CD4-positive, alpha-beta T cell (primary cell): ENCODE measurements at regions of chr12 and their contacts with region 1.

Region 1: DNA sequence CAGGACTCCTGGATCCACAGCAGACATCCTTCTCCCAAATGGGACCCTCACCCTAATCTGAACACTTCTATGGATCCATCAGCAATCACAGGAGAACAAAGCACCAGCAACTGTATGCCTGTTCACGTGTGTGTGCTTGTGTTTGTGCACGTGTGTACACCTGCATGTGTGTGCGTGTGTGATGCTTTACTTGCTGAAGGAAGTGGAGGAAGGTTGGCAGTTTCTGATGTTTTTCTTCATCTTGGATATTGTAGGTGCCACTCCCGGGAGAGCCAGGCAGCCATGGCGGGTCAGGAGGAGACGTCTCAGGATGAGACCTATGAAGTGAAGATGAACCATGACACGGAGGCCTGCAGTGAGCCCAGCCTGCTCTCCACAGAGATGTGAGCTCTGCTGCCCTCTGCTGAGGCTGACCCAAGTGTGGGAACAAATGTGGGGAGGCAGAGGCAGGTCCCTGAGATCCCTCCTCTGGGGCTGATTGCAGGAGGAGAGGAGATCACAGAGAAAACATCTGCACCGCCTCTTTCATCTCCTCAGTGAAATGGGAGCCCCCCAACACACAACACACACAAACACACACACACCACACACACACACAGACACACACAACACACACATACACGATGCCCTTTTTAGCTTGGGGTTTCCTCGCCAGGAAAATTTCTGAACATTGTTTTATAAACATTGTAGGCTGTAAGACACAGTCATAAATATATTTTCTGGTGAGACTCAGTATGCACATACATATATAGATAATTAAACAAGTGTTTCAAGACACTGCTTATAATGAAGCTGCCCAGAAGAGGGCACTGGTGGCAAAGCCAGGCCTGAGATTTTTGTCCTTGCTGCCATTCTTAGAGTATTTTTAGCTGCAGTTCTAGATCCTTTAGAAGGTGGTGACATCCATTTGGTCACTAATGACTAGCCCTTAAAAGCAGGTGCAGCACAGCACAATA is 112.2 kb upstream of the FKBP4 start:
- DNase-seq: peak in 12 of 14 experiments; percentile 21 to 74 (median 37)
- ATAC-seq: peak; percentile 81
- H3K4me3 ChIP-seq: no peak overlapping the region
- H3K4me3 Mint-ChIP-seq: peak overlapping the region; percentile 40
- H3K27ac ChIP-seq: no peak overlapping the region
- H3K27ac Mint-ChIP-seq: peak overlapping the region; percentile 30
- H3K4me1 ChIP-seq: peaks cover 6% of the 10 kb centered on the region
- H3K4me1 Mint-ChIP-seq: peaks cover 7% of the 10 kb centered on the region
- H3K27me3 ChIP-seq: no peaks in the 10 kb centered on the region
- H3K27me3 Mint-ChIP-seq: no peaks in the 10 kb centered on the region
- CTCF ChIP-seq: peak; percentile 62

Region 2: GRCh38 chr12:2783936-2784600 is 101.5 kb after region 1 on chr12:
- CTCF ChIA-PET with region 1: interaction called, 27 read pairs
- POLR2A ChIA-PET with region 1: interaction called, 5 read pairs
- intact Hi-C with region 1: loop called (anchors 1 kb)
- DNase-seq: peak in 13 of 14 experiments; percentile 12 to 72 (median 34)
- ATAC-seq: peak; percentile 91
- H3K4me3 ChIP-seq: peak overlapping the region; percentile 29
- H3K4me3 Mint-ChIP-seq: peak overlapping the region; percentile 80
- H3K27ac ChIP-seq: no peak overlapping the region
- H3K27ac Mint-ChIP-seq: no peak overlapping the region
- H3K4me1 ChIP-seq: peaks cover 10% of the 10 kb centered on the region
- H3K4me1 Mint-ChIP-seq: peaks cover 9% of the 10 kb centered on the region
- H3K27me3 ChIP-seq: no peaks in the 10 kb centered on the region
- H3K27me3 Mint-ChIP-seq: peaks cover 19% of the 10 kb centered on the region
- CTCF ChIP-seq: peak; percentile 90

Region 3: DNA sequence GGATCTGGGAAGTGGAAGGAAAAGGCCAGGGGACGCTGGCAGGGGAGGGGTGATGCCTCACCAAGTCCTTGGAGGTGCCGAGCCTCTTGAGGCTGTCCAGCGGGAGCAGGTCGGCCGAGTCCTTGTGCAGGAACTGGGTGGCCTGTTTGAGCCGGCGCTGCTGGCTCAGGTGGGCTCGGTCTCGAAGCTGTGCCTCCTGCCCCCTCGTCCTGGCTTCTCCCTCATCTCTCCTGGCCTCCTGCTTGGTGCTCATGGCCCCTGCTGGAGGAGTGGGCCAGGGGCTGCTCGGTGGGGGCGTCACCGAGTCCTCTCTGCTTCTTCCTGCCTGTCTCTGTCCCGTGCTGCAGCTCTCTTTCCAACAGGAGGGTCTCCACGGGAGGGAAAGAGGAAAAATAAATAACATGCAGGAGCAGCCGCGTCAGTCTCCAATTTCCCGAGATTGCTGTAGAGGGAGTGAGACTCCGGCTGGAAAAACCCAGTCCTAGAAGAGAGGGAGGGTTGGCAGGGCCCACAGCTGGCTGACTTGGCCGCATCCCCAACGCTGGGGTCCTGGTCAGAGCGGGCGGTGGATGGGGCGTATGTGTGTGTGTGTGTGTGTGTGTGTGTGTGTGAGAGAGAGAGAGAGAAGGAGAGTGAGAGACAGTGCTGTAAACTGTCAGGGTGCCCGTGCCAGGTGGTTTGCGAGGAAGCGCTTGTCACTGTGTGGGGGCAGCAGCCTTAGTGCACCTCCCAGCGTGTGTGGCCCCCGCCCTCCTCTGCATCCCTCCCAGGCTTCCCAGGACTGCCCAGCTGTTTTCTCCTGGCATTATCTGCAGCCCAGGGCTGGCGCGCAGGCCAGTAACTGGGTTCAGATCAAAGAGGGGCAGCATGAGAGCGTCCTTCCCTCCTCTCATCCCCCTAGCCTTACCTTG is 152.3 kb after region 1 on chr12 and contains the start of gene NRIP2:
- CTCF ChIA-PET with region 1: no interaction called
- POLR2A ChIA-PET with region 1: no interaction called
- intact Hi-C with region 1: no loop called
- DNase-seq: no peak
- ATAC-seq: no peak
- H3K4me3 ChIP-seq: no peak within 1 kb of the TSS
- H3K4me3 Mint-ChIP-seq: no peak within 1 kb of the TSS
- H3K27ac ChIP-seq: no peak within 1 kb of the TSS
- H3K27ac Mint-ChIP-seq: peak within 1 kb of the TSS; percentile 5
- H3K4me1 ChIP-seq: no peaks in the 10 kb centered on the region
- H3K4me1 Mint-ChIP-seq: peaks cover 12% of the 10 kb centered on the region
- H3K27me3 ChIP-seq: no peaks in the 10 kb centered on the region
- H3K27me3 Mint-ChIP-seq: no peaks in the 10 kb centered on the region
- CTCF ChIP-seq: no peak
- total RNA-seq, gene NRIP2: not detected

Region 4: GRCh38 chr12:3041558-3042164 is 359.1 kb after region 1 on chr12:
- CTCF ChIA-PET with region 1: no interaction called
- POLR2A ChIA-PET with region 1: no interaction called
- intact Hi-C with region 1: loop called in 1 of 2 experiments (anchors 2 kb)
- DNase-seq: peak in 13 of 14 experiments; percentile 14 to 72 (median 25)
- ATAC-seq: peak; percentile 67
- H3K4me3 ChIP-seq: no peak overlapping the region
- H3K4me3 Mint-ChIP-seq: no peak overlapping the region
- H3K27ac ChIP-seq: no peak overlapping the region
- H3K27ac Mint-ChIP-seq: no peak overlapping the region
- H3K4me1 ChIP-seq: no peaks in the 10 kb centered on the region
- H3K4me1 Mint-ChIP-seq: no peaks in the 10 kb centered on the region
- H3K27me3 ChIP-seq: peaks cover 10 to 17% of the 10 kb centered on the region in 2 experiments
- H3K27me3 Mint-ChIP-seq: peaks cover 36% of the 10 kb centered on the region
- CTCF ChIP-seq: peak; percentile 55

Region 5: GRCh38 chr12:3060778-3061458 is 378.3 kb after region 1 on chr12:
- CTCF ChIA-PET with region 1: no interaction called
- POLR2A ChIA-PET with region 1: no interaction called
- intact Hi-C with region 1: no loop called
- DNase-seq: no peak
- ATAC-seq: no peak
- H3K4me3 ChIP-seq: no peak overlapping the region
- H3K4me3 Mint-ChIP-seq: no peak overlapping the region
- H3K27ac ChIP-seq: no peak overlapping the region
- H3K27ac Mint-ChIP-seq: no peak overlapping the region
- H3K4me1 ChIP-seq: no peaks in the 10 kb centered on the region
- H3K4me1 Mint-ChIP-seq: no peaks in the 10 kb centered on the region
- H3K27me3 ChIP-seq: peaks cover 0 to 3% of the 10 kb centered on the region in 2 experiments
- H3K27me3 Mint-ChIP-seq: peaks cover 49% of the 10 kb centered on the region
- CTCF ChIP-seq: no peak